AG04450 (cell line): ENCODE measurements at regions of chr1 and their contacts with region 1.

Region 1: GRCh38 chr1:1615256-1616044 is at the start of gene MIB2:
- DNase-seq: peak; percentile 87
- H3K4me3 ChIP-seq: peak within 1 kb of the TSS; percentile 93
- H3K27ac ChIP-seq: peak within 1 kb of the TSS; percentile 100
- H3K27me3 ChIP-seq: no peaks in the 10 kb centered on the region
- CTCF ChIP-seq: no peak
- polyA plus RNA-seq, gene MIB2: 9.4 and 14.0 TPM in 2 replicates

Region 2: GRCh38 chr1:1273512-1274298 is 341.7 kb before region 1 on chr1 and contains the start of gene UBE2J2:
- CTCF ChIA-PET with region 1: no interaction called
- POLR2A ChIA-PET with region 1: no interaction called
- DNase-seq: peak; percentile 85
- H3K4me3 ChIP-seq: peak within 1 kb of the TSS; percentile 87
- H3K27ac ChIP-seq: peak within 1 kb of the TSS; percentile 61
- H3K27me3 ChIP-seq: no peaks in the 10 kb centered on the region
- CTCF ChIP-seq: no peak
- polyA plus RNA-seq, gene UBE2J2: 31.1 and 31.4 TPM in 2 replicates

Region 3: DNA sequence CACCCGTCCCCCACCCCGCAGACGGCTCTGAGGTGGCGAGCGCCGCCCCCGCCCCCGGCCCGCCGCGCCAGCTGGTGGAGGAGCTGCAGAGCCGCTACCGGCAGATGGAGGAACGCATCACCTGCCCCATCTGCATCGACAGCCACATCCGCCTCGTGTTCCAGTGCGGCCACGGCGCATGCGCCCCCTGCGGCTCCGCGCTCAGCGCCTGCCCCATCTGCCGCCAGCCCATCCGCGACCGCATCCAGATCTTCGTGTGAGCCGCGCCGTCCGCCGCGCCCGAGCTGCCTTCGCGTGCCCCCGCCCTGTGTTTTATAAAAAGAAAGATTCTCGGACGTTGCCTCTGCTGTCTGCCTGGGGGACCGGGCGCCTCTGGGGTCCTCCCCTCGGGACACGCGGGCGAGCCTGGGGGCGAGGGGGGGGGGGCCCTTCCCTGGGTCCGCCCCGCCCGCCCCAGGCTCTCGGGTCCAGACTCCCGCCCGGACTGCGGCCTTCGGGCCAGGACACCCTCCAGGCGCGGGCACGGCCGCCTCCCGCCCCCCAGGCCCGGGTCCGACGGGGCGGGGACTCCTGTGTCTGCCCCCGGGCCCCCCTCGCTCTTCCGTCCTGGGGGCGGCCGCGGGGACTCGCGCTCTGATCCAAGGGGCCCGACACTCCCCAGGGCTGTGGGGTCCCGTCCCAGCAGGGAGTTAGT is 15.0 kb after region 1 on chr1:
- CTCF ChIA-PET with region 1: no interaction called
- POLR2A ChIA-PET with region 1: interaction called, 12 read pairs
- DNase-seq: no peak
- H3K4me3 ChIP-seq: no peak overlapping the region
- H3K27ac ChIP-seq: no peak overlapping the region
- H3K27me3 ChIP-seq: peaks cover 3% of the 10 kb centered on the region
- CTCF ChIP-seq: no peak